Mammary epithelial cell (primary cell): ENCODE measurements at regions of chr3 and their contacts with region 1.

Region 1: GRCh38 chr3:129249276-129250065 is at the start of gene COPG1:
- DNase-seq: peak; percentile 84
- H3K4me3 ChIP-seq: peak within 1 kb of the TSS; percentile 89 to 94 (median 92)
- H3K27ac ChIP-seq: peak within 1 kb of the TSS; percentile 83
- H3K4me1 ChIP-seq: peaks cover 28% of the 10 kb centered on the region
- H3K27me3 ChIP-seq: no peaks in the 10 kb centered on the region
- CTCF ChIP-seq: no peak
- total RNA-seq, gene COPG1: 173 to 176 TPM

Region 2: DNA sequence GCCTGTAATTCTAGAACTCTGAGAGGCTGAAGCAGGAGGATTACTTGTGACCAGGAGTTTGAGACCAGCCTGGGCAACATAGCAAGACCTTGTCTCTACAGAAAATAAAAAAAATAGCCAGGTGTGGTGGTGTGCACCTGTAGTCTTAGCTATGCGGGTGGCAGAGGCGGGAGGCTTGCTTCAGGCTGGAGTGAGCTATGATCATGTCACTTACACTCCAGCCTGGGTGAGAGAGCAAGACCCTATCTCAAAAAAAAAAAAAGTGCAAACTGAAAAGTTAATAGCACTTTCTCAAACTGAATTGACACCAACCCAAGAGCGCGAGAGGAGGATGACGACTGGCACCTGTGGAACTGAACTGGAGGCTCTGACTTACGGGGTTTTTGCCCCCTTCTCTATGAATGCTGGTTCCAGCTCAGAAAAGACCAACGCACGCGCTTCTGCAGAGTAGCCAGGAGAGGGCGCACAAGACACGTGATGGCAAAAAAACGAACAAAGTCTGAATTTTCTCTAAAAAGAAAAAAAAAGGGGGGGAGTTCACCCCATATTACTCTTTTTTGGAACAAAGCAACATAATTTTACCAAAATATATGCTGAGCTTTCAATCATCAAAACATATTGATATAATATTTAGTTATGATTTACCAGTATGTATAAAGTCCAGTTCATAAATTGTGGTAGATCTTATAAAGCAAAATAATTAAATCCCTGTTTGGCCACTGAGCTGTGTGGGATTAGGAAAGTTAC is 279.3 kb before region 1 on chr3:
- CTCF ChIA-PET with region 1: interaction called, 8 read pairs
- dilution Hi-C with region 1: no loop called
- in situ Hi-C with region 1: no loop called
- intact Hi-C with region 1: loop called (anchors 1 kb)
- DNase-seq: no peak
- H3K4me3 ChIP-seq: no peak overlapping the region
- H3K27ac ChIP-seq: no peak overlapping the region
- H3K4me1 ChIP-seq: peaks cover 11% of the 10 kb centered on the region
- H3K27me3 ChIP-seq: no peaks in the 10 kb centered on the region
- CTCF ChIP-seq: peak; percentile 83 to 90

Region 3: DNA sequence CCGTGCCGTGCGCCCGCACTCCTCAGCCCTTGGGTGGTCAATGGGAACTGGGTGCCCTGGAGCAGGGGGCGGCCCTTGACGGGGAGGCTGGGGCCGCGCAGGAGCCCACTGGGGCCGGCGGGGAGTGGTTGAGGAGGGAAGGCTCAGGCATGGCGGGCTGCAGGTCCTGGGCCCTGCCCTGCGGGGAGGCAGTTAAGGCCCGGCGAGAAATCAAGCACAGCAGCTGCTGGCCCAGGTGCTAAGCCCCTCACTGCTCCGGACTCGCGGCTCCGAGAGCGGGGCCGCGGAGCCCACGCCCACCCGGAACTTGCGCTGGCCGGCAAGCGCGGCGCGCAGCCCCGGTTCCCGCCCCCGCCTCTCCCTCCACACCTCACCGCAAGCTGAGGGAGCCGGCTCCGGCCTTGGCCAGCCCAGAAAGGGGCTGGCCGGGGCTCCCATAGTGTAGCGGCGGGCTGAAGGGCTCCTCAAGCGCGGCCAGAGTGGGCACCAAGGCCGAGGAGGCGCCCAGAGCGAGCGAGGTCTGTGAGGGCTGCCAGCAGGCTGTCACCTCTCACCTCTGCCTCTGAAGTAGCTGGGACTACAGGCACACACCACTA is 181.1 kb before region 1 on chr3:
- CTCF ChIA-PET with region 1: no interaction called
- dilution Hi-C with region 1: loop called (anchors 10 kb)
- in situ Hi-C with region 1: no loop called
- intact Hi-C with region 1: no loop called
- DNase-seq: no peak
- H3K4me3 ChIP-seq: peak overlapping the region in 2 of 3 experiments; percentile 11 to 31
- H3K27ac ChIP-seq: no peak overlapping the region
- H3K4me1 ChIP-seq: peaks cover 7% of the 10 kb centered on the region
- H3K27me3 ChIP-seq: no peaks in the 10 kb centered on the region
- CTCF ChIP-seq: no peak

Region 4: GRCh38 chr3:129144786-129145185 is 104.7 kb before region 1 on chr3:
- CTCF ChIA-PET with region 1: interaction called, 21 read pairs
- dilution Hi-C with region 1: no loop called
- in situ Hi-C with region 1: no loop called
- intact Hi-C with region 1: no loop called
- DNase-seq: no peak
- H3K4me3 ChIP-seq: no peak overlapping the region
- H3K27ac ChIP-seq: no peak overlapping the region
- H3K4me1 ChIP-seq: no peaks in the 10 kb centered on the region
- H3K27me3 ChIP-seq: no peaks in the 10 kb centered on the region
- CTCF ChIP-seq: no peak

Region 5: GRCh38 chr3:129183569-129184395 is 65.7 kb before region 1 on chr3 and contains the start of gene CNBP:
- CTCF ChIA-PET with region 1: interaction called, 6 read pairs
- dilution Hi-C with region 1: no loop called
- in situ Hi-C with region 1: no loop called
- intact Hi-C with region 1: loop called (anchors 1 kb)
- DNase-seq: peak; percentile 94
- H3K4me3 ChIP-seq: peak within 1 kb of the TSS; percentile 73 to 95 (median 94)
- H3K27ac ChIP-seq: peak within 1 kb of the TSS; percentile 85
- H3K4me1 ChIP-seq: peaks cover 21% of the 10 kb centered on the region
- H3K27me3 ChIP-seq: no peaks in the 10 kb centered on the region
- CTCF ChIP-seq: no peak
- total RNA-seq, gene CNBP: 252 to 307 TPM

Region 6: DNA sequence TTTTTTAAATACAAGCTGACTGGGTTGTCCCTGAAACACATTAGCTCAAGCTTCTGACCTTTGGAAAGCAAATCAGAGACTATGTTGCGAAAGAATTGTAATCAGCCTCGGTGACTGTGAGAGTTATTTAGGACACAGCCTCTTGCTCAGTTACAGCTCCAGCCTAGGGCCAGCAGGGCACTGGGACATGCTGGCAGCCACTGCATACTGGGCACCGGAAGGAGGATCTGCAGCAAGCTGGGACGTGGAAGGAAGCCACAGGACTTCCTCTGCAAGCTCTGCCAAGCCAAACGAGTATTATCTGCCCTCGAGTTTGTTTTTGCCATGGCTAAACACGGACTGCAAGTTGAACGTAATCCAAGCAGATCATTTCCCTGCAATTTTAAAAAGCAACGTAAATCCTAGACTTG is 24.5 kb before region 1 on chr3:
- CTCF ChIA-PET with region 1: no interaction called
- dilution Hi-C with region 1: no loop called
- in situ Hi-C with region 1: no loop called
- intact Hi-C with region 1: loop called (anchors 2 kb)
- DNase-seq: peak; percentile 63
- H3K4me3 ChIP-seq: peak overlapping the region in 1 of 3 experiments; percentile 3
- H3K27ac ChIP-seq: no peak overlapping the region
- H3K4me1 ChIP-seq: peaks cover 41% of the 10 kb centered on the region
- H3K27me3 ChIP-seq: no peaks in the 10 kb centered on the region
- CTCF ChIP-seq: no peak

Region 7: DNA sequence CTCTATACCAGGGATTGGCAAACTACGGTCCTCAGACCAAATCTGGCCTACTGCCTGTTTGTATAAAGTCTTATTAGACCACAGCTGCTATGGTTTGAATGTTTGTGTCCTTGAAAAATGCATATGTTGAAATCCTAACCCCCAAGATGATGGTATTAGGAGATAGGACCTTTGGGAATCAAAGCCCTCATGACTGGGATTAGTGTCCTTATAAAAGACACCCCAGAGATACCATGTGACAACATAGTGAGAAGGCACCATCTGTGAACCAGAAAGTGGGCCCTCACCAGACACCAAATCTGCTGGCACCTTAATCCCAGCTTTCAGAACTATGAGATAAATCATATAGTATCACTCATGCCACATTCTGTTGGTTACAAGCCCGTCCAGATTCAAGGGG is 36.6 kb after region 1 on chr3:
- CTCF ChIA-PET with region 1: no interaction called
- dilution Hi-C with region 1: no loop called
- in situ Hi-C with region 1: no loop called
- intact Hi-C with region 1: no loop called
- DNase-seq: no peak
- H3K4me3 ChIP-seq: no peak overlapping the region
- H3K27ac ChIP-seq: no peak overlapping the region
- H3K4me1 ChIP-seq: peaks cover 20% of the 10 kb centered on the region
- H3K27me3 ChIP-seq: no peaks in the 10 kb centered on the region
- CTCF ChIP-seq: no peak

Region 8: GRCh38 chr3:129383292-129383860 is 133.9 kb after region 1 on chr3:
- CTCF ChIA-PET with region 1: no interaction called
- dilution Hi-C with region 1: no loop called
- in situ Hi-C with region 1: no loop called
- intact Hi-C with region 1: no loop called
- DNase-seq: peak; percentile 49
- H3K4me3 ChIP-seq: no peak overlapping the region
- H3K27ac ChIP-seq: no peak overlapping the region
- H3K4me1 ChIP-seq: no peaks in the 10 kb centered on the region
- H3K27me3 ChIP-seq: no peaks in the 10 kb centered on the region
- CTCF ChIP-seq: peak; percentile 69 to 81

Region 9: DNA sequence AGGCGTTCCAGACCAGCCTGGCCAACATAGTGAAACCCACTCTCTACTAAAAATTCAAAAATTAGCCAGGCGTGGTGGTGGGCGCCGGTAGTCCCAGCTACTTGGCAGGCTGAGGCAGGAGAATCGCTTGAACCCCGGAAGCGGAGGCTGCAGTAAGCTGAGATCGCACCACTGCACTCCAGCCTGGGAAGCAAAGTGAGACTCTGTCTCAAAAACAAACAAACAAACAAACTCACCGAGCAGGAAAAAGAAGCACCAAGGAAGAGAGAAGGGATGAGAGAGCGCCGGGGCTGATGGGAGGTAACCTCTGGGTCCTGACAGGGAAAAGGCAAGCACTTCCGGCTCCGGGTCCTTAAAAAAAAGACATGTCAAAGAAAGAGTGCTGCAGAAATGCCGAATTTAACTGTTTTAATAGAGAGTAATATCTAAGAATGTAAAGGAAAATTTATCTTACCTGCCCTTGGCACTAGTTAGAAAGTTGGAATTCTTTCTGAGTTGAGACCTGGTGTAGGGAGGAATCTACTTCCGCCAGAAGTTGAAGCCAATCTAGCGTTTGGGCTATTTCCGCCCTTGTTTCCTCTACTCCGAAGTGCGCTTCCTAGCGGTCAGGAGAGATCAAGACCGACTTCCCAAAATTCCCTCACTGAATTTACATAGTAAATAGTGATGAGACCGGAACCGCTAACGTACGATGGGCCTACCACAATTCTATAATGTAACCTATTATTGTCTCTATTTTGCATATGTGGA is 149.8 kb after region 1 on chr3:
- CTCF ChIA-PET with region 1: no interaction called
- dilution Hi-C with region 1: no loop called
- in situ Hi-C with region 1: no loop called
- intact Hi-C with region 1: no loop called
- DNase-seq: peak; percentile 94
- H3K4me3 ChIP-seq: peak overlapping the region; percentile 63 to 72 (median 64)
- H3K27ac ChIP-seq: peak overlapping the region; percentile 95
- H3K4me1 ChIP-seq: peaks cover 3% of the 10 kb centered on the region
- H3K27me3 ChIP-seq: no peaks in the 10 kb centered on the region
- CTCF ChIP-seq: peak; percentile 92 to 95